HAP-1 (cell line): ENCODE measurements at regions of chr18 and their contacts with region 1.

Region 1: DNA sequence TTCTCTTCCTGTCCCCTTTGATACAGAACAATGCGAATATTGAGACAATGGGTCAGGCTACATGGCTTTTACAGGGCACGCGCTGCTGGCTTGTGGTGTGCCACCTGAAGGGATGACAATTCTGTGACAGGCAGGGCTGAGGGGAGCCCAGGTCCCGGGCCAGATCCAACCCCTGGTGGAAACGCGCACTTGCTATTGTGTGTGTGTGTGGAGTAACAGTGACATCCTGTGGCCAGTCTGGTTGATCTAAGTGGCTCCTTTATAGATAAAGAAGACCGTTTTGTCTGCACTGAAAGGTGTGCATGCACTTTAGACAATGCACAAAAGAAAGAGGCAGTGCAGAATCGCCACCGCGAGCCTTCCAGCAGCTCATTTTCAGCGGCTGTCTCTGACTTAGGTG is 273.6 kb downstream of the HRH4 start:
- DNase-seq: peak; percentile 15 to 35
- H3K4me3 ChIP-seq: no peak overlapping the region
- H3K4me1 ChIP-seq: no peaks in the 10 kb centered on the region
- H3K27me3 ChIP-seq: peaks cover 2% of the 10 kb centered on the region; the same call in 1 of the 2 replicates

Region 2: GRCh38 chr18:24543805-24544498 is 190.1 kb before region 1 on chr18:
- in situ Hi-C with region 1: loop called (anchors 10 kb)
- DNase-seq: peak; percentile 35 to 51
- H3K4me3 ChIP-seq: no peak overlapping the region
- H3K4me1 ChIP-seq: peaks cover 8% of the 10 kb centered on the region; the same call in 1 of the 2 replicates
- H3K27me3 ChIP-seq: no peaks in the 10 kb centered on the region

Region 3: GRCh38 chr18:24846138-24846537 is 112.1 kb after region 1 on chr18:
- in situ Hi-C with region 1: no loop called
- DNase-seq: no peak
- H3K4me3 ChIP-seq: no peak overlapping the region
- H3K4me1 ChIP-seq: no peaks in the 10 kb centered on the region
- H3K27me3 ChIP-seq: no peaks in the 10 kb centered on the region

Region 4: DNA sequence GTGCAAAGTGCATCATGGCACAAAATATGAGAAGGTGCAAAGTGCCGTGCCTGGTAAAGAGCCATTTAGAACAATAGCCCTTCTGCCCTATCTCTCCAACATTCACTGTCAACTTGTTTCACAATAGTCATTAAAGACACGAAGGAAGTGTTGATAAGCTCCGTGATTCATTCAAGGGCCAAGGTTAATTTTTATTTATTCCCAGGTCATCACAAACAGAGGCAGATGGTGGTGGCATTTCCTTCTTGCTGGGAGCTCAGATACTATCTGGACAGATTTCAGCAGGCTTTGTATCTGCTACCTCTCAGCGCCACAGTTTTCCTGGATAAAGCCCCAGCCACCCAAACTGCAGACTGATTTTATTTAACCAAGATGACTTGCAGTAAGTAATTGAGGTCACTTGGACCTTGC is 308.6 kb after region 1 on chr18:
- in situ Hi-C with region 1: no loop called
- DNase-seq: no peak
- H3K4me3 ChIP-seq: no peak overlapping the region
- H3K4me1 ChIP-seq: peaks cover 12% of the 10 kb centered on the region
- H3K27me3 ChIP-seq: no peaks in the 10 kb centered on the region